ENCODE measurements at regions of chr17 and their contacts with region 1.

Region 1: GRCh38 chr17:39144416-39144840 is 7.0 kb downstream of the PLXDC1 start:
- DNase-seq: peak; percentile 83 to 90
- ATAC-seq: peak; percentile 77 to 83
- H3K4me3 ChIP-seq: no peak overlapping the region
- H3K27ac ChIP-seq: peak overlapping the region; percentile 51 to 71 (median 68)
- H3K4me1 ChIP-seq: peaks cover 4 to 6% of the 10 kb centered on the region in 2 donors
- H3K27me3 ChIP-seq: no peaks in the 10 kb centered on the region
- CTCF ChIP-seq: no peak
- POLR2A ChIP-seq: no peak

Region 2: DNA sequence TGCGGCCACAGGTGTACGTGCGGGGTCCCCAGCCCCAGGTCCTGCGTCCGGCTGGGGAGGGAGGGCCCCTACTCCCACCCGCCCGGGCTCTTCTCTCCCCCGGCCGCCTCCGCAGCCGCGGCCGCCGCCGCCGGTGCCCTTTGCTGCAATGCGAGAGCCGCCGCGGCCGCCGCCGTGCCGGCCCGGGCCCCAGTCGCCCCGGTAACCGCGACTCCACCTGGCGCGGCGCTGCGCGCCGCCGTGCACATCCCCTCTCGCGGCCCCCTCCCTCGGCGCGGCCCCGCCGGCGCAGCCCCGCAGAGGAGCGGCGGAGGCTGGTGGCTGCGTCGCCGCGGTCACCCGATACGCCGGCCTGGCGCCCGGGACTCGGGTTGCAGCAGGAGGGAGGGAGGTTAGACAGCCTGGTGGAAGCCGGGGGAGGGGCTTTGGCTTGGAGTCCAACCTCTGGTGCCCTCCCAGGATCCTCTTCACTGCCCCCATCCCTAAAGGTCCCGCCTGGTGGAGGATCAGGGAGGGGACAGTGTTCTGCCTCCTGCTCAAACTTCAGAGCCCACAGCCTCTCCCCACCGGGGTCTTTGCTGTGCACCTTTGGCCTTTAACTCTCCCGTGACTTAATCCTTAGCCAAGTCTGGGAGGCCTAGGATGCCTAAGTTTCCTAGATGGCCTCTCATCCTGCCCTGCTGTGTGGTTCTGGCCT is 571.6 kb before region 1 on chr17:
- in situ Hi-C with region 1: no loop called
- intact Hi-C with region 1: no loop called
- DNase-seq: no peak
- ATAC-seq: no peak
- H3K4me3 ChIP-seq: peak overlapping the region in 2 of 4 donors; percentile 29 to 34
- H3K27ac ChIP-seq: no peak overlapping the region
- H3K4me1 ChIP-seq: no peaks in the 10 kb centered on the region
- H3K27me3 ChIP-seq: peaks cover 42 to 53% (median 43%) of the 10 kb centered on the region in 3 donors
- CTCF ChIP-seq: no peak
- POLR2A ChIP-seq: no peak

Region 3: DNA sequence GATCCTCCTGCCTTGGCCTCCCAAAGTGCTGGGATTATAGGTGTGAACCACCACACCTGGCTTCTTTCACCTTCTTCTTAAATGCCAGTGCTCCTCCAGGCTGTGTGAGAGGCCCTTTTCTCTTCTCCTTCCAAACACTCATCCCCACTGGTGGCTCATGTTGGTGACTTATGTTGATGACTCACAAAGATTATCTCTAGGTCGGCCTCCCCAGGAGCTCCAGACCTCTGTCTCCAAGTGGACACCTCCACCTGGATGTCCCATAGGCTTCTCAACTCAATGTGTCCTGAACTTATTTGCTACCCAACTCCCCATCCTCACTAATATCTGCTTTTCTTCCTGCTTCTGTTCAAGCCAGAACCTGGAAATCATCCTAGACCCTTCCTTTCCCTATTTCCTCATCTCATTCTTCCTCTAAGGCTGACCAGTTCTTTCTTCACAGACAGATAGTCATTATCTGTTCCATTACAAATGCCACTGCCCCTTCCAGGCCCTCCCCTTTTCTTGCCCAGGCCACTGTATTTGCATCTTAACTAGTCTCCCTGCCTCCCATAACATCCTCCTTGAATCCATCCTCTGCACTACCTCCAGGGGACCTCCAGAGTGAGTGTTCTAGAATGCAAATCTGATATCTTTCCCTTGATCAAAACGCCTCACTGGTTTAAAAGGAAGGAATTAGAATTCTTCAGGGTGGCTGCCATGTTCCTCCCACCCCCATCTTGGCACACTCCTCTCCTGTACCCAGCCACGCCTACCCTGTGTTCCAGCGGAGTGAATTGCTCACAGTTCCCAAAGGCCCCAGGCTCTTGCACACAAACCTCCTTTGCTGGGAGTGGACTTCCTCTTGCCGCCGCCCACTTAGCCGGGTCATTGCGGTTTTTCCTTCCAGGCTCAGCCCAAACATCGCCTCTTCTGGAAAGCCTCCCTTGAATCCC is 142.5 kb before region 1 on chr17:
- in situ Hi-C with region 1: no loop called
- intact Hi-C with region 1: loop called (anchors 5 kb)
- DNase-seq: peak; percentile 63 to 78
- ATAC-seq: peak; percentile 82 to 84
- H3K4me3 ChIP-seq: peak overlapping the region; percentile 27 to 48 (median 32)
- H3K27ac ChIP-seq: peak overlapping the region; percentile 76 to 90 (median 80)
- H3K4me1 ChIP-seq: peaks cover 14 to 21% of the 10 kb centered on the region in 2 donors
- H3K27me3 ChIP-seq: no peaks in the 10 kb centered on the region
- CTCF ChIP-seq: no peak
- POLR2A ChIP-seq: no peak

Region 4: GRCh38 chr17:39069114-39069756 is 75.2 kb before region 1 on chr17:
- in situ Hi-C with region 1: loop called in 1 of 4 experiments (anchors 10 kb)
- intact Hi-C with region 1: no loop called
- DNase-seq: no peak
- ATAC-seq: peak in 1 of 2 donors; percentile 24
- H3K4me3 ChIP-seq: no peak overlapping the region
- H3K27ac ChIP-seq: no peak overlapping the region
- H3K4me1 ChIP-seq: no peaks in the 10 kb centered on the region
- H3K27me3 ChIP-seq: no peaks in the 10 kb centered on the region
- CTCF ChIP-seq: peak in 4 of 5 experiments; percentile 30 to 46 (median 42)
- POLR2A ChIP-seq: no peak

Region 5: DNA sequence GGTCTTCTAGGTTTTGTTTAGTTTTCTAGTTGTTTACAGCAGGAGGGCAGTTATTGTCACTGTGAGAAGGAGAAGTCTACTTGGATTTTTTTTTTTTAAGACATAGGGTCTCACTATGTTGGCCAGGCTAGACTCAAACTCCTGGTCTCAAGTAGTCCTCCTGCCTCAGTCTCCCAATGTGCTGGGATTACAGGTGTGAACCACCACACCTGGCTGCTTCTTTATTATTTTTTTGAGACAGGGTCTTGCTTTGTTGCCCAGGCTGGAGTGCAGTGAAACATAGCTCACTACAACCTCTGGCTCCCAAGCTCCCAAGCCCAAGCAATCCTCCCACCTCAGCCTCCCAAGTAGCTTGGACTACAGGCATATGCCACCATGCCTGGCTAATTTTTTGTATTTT is 149.6 kb after region 1 on chr17:
- in situ Hi-C with region 1: no loop called
- intact Hi-C with region 1: no loop called
- DNase-seq: no peak
- ATAC-seq: no peak
- H3K4me3 ChIP-seq: no peak overlapping the region
- H3K27ac ChIP-seq: no peak overlapping the region
- H3K4me1 ChIP-seq: no peaks in the 10 kb centered on the region
- H3K27me3 ChIP-seq: no peaks in the 10 kb centered on the region
- CTCF ChIP-seq: no peak
- POLR2A ChIP-seq: no peak

Measured in gastrocnemius medialis (tissue), 4 donors.